ENCODE measurements at regions of chr1 and their contacts with region 1.

Region 1: GRCh38 chr1:177256153-177257075 is 85.7 kb downstream of the BRINP2 start:
- DNase-seq: no peak

Region 2: DNA sequence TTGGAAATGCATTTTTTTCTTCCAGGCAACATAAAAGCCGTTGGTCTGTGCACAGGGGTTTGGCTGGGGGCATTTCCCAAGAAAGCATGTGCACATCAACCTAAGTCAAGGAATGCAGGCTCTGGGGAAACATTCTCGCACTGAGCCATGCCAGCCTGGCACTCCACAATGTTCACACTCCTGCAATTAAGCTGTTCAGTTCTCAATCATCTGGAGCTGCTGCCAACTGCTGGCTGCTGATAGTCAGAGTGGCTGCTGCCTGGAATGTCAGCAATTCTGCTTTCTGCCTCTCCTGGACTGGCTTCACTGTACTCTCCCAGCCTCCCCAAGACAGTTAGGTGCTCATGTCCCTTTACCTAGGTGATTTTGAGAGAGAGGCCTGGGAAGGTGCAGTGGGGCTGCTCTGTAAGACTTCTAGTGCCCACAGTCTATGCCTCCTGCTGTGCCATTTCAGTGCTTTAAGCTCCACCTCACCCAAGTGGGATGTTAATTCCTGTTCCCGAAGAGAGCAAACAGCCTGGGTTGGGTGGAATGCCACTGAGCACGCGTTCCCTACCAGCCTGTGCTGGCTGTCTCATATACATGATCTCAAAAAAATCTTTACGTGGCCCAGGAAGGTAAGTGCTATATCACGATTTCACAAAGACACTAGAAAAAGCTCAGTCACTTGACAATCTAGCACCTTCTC is 46.1 kb after region 1 on chr1:
- intact Hi-C with region 1: loop called (anchors 5 kb)
- DNase-seq: no peak

Region 3: DNA sequence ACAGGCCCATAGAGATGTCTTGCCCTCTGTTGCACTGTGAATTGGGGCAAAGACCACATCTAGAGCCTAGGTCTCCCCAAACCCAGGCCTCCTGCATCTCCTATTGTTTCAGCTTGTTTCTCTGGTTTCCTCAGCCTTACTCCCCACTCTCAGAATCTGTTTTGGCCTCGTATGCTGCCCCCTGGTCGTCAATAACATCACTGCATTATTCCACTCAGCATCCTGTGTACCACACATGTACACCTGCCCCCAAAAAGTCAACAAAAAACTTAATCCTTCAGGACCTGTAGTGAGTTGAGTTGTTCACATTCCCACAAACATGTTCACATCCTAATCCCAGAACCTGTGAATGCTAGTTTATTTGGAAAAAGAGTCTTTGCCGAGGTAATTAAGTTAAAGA is 99.2 kb after region 1 on chr1:
- intact Hi-C with region 1: loop called (anchors 2 kb)
- DNase-seq: no peak

Region 4: GRCh38 chr1:177780096-177780700 is 523.8 kb after region 1 on chr1:
- intact Hi-C with region 1: loop called (anchors 2 kb)
- DNase-seq: no peak

Region 5: GRCh38 chr1:177948336-177948972 is 692.0 kb after region 1 on chr1:
- intact Hi-C with region 1: loop called (anchors 10 kb)
- DNase-seq: no peak

Region 6: GRCh38 chr1:178172954-178173353 is 916.5 kb after region 1 on chr1:
- intact Hi-C with region 1: no loop called
- DNase-seq: no peak

Measured in cardiac septum (tissue), 1 donor.